ENCODE measurements at regions of chr13 and their contacts with region 1.

Region 1: GRCh38 chr13:101341464-101341863 is 74.8 kb downstream of the NALCN start:
- DNase-seq: no peak
- H3K4me3 ChIP-seq: no peak overlapping the region
- CTCF ChIP-seq: no peak

Region 2: DNA sequence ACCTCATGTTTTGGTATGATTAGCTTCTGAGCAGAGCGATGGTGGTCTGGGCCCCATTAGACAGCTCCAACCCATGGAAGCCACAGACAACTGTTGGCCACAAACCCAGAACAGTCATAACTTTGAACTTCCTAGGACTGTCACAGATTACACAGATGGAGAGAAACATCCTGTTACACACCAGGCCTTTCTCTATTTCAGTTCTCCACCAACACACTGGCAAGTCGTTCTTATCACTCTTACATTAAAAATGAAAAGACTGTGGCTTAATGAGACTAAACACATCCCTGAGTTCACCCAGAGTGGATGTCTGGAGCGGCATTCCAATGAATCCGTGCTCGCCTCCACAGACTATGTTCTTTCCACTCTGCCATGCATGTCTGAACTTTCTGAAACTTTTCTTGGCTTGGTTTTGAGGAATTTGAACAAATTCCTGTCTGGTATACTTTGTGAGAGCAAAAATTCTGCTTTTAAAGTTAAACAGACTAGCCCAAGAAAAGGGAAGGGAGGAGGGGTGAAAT is 34.2 kb before region 1 on chr13:
- in situ Hi-C with region 1: loop called (anchors 5 kb)
- DNase-seq: peak; percentile 88
- H3K4me3 ChIP-seq: no peak overlapping the region
- CTCF ChIP-seq: no peak

Measured in astrocyte of the cerebellum (primary cell).